HepG2 (cell line): ENCODE measurements at regions of chr7 and their contacts with region 1.

Region 1: GRCh38 chr7:48088559-48089045 is 463 bp upstream of the UPP1 start:
- DNase-seq: peak; percentile 97
- ATAC-seq: peak; percentile 89
- H3K4me3 ChIP-seq: peak overlapping the region; percentile 52 to 87 (median 86)
- H3K27ac ChIP-seq: peak overlapping the region; percentile 90
- H3K4me1 ChIP-seq: peaks cover 53% of the 10 kb centered on the region
- H3K27me3 ChIP-seq: no peaks in the 10 kb centered on the region
- CTCF ChIP-seq: no peak
- EP300 ChIP-seq: peak in 1 of 2 experiments; percentile 47; a peak in 1 of 4 replicates
- POLR2A ChIP-seq: peak; percentile 75 to 86
- RAD21 ChIP-seq: 0 out of 2 replicates have a peak, but pooled peaks have one; percentile 29

Region 2: DNA sequence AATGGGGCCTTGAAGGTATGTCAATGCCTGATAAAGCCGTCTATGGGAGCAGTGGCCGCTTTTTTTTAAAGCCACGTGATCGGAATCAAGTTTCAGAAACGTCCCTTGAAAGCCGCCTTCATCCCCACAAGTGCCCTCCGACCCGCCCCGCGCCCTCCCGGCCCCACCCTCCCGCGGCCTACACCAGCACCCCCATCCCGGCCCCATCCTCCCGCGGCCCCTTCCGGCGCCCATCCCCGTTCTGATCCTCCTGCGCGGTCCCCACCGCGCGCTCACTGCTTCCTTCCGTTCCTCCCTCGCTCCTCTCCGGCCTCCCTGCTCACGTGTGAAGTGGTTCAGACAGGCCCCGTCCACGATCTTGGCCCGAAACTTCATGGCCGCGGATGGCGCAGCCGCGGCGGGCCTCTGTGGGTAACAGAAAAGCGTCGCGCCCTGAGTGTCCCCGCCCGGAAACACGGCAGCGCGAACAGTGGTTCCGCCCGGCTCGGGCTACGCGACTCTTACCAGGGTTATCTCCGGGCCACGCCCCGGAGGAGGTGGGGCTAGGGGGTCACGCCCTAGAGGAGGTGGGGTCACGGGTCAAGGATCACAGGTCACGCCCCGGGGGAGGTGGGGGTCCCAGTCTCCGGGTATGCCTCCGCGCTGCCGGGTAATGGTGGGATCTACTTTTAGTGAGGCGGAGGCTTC is 109.3 kb before region 1 on chr7 and contains the start of gene HUS1:
- CTCF ChIA-PET with region 1: no interaction called
- POLR2A ChIA-PET with region 1: interaction called, 5 read pairs
- in situ Hi-C with region 1: no loop called
- intact Hi-C with region 1: loop called (anchors 1 kb)
- DNase-seq: peak; percentile 80
- ATAC-seq: peak; percentile 99
- H3K4me3 ChIP-seq: peak within 1 kb of the TSS; percentile 72 to 81 (median 77)
- H3K27ac ChIP-seq: peak within 1 kb of the TSS; percentile 77
- H3K4me1 ChIP-seq: peaks cover 15% of the 10 kb centered on the region
- H3K27me3 ChIP-seq: no peaks in the 10 kb centered on the region; a peak in 1 of 5 replicates
- CTCF ChIP-seq: no peak; the same call in none of the 2 replicates
- EP300 ChIP-seq: peak in 1 of 2 experiments; percentile 42; a peak in 2 of 4 replicates
- POLR2A ChIP-seq: peak; percentile 75 to 78
- RAD21 ChIP-seq: 0 out of 2 replicates have a peak, but pooled peaks have one; percentile 43
- total RNA-seq, gene HUS1: 16.9 and 23.4 TPM in 2 replicates

Region 3: GRCh38 chr7:47991741-47992311 is 96.8 kb before region 1 on chr7:
- CTCF ChIA-PET with region 1: no interaction called
- POLR2A ChIA-PET with region 1: interaction called, 12 read pairs
- in situ Hi-C with region 1: no loop called
- intact Hi-C with region 1: loop called (anchors 2 kb)
- DNase-seq: peak; percentile 63
- ATAC-seq: peak; percentile 99
- H3K4me3 ChIP-seq: peak overlapping the region; percentile 41 to 72 (median 42)
- H3K27ac ChIP-seq: no peak overlapping the region
- H3K4me1 ChIP-seq: peaks cover 40% of the 10 kb centered on the region
- H3K27me3 ChIP-seq: no peaks in the 10 kb centered on the region
- CTCF ChIP-seq: peak; percentile 88
- EP300 ChIP-seq: no peak
- POLR2A ChIP-seq: no peak
- RAD21 ChIP-seq: peak; percentile 79

Region 4: GRCh38 chr7:48011323-48011722 is 77.3 kb before region 1 on chr7:
- CTCF ChIA-PET with region 1: no interaction called
- POLR2A ChIA-PET with region 1: no interaction called
- in situ Hi-C with region 1: no loop called
- intact Hi-C with region 1: no loop called
- DNase-seq: no peak
- ATAC-seq: no peak
- H3K4me3 ChIP-seq: no peak overlapping the region
- H3K27ac ChIP-seq: no peak overlapping the region
- H3K4me1 ChIP-seq: no peaks in the 10 kb centered on the region
- H3K27me3 ChIP-seq: peaks cover 0 to 14% of the 10 kb centered on the region in 2 experiments; a peak in 2 of 5 replicates
- CTCF ChIP-seq: no peak
- EP300 ChIP-seq: no peak
- POLR2A ChIP-seq: no peak
- RAD21 ChIP-seq: no peak

Region 5: GRCh38 chr7:48035301-48035966 is 53.2 kb before region 1 on chr7 and contains the start of gene C7orf57:
- CTCF ChIA-PET with region 1: no interaction called
- POLR2A ChIA-PET with region 1: no interaction called
- in situ Hi-C with region 1: no loop called
- intact Hi-C with region 1: loop called (anchors 5 kb)
- DNase-seq: peak; percentile 54
- ATAC-seq: peak; percentile 99
- H3K4me3 ChIP-seq: peak within 1 kb of the TSS in 2 of 3 experiments; percentile 37 to 63; a peak in 4 of 6 replicates
- H3K27ac ChIP-seq: no peak within 1 kb of the TSS
- H3K4me1 ChIP-seq: peaks cover 10% of the 10 kb centered on the region
- H3K27me3 ChIP-seq: peaks cover 0 to 23% of the 10 kb centered on the region in 2 experiments; a peak in 3 of 5 replicates
- CTCF ChIP-seq: peak; percentile 77
- EP300 ChIP-seq: no peak
- POLR2A ChIP-seq: no peak
- RAD21 ChIP-seq: no peak
- total RNA-seq, gene C7orf57: not detected in 2 replicates

Region 6: DNA sequence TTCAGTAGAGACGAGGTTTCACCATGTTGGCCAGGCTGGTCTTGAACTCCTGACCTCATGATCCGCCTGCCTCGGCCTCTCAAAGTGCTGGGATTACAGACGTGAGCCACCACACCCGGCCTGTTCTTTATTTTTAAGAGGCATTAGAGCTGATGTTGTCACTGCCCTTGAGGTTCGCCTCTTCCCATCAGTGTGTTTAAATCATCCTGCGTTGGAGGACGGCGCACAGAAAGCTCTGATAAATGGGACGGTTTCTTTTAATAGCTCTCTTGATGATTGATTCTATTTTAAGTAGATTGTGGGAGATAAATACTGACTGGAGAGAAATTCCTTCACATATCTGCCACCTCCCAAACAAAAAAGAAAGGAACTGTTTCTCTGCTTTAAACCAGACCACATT is 29.4 kb after region 1 on chr7:
- CTCF ChIA-PET with region 1: no interaction called
- POLR2A ChIA-PET with region 1: no interaction called
- in situ Hi-C with region 1: no loop called
- intact Hi-C with region 1: no loop called
- DNase-seq: no peak
- ATAC-seq: no peak
- H3K4me3 ChIP-seq: no peak overlapping the region
- H3K27ac ChIP-seq: no peak overlapping the region
- H3K4me1 ChIP-seq: 0 out of 2 replicates have a peak, but pooled peaks cover 6% of the 10 kb centered on the region
- H3K27me3 ChIP-seq: no peaks in the 10 kb centered on the region
- CTCF ChIP-seq: no peak
- EP300 ChIP-seq: no peak
- POLR2A ChIP-seq: no peak
- RAD21 ChIP-seq: no peak

Region 7: DNA sequence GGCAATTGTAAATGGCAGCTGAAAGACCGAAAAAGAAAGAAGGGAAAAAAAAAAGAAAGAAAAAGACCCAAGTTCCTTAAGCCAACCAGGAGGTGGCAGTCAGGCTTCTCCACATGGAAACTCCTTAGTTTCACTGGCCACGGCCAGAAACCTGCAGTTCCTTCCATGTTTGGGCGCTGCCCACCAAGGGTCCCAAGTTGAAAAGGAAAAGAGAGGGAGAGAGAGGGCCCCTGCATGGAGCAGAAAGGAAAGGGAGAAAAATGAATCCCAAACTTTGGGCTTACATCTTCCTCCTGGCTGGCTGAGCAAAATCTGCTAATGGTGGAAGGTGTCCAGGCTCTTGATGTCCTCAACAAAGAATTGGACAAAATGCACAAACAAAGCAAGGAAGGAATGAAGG is 50.9 kb after region 1 on chr7:
- CTCF ChIA-PET with region 1: no interaction called
- POLR2A ChIA-PET with region 1: interaction called, 34 read pairs
- in situ Hi-C with region 1: no loop called
- intact Hi-C with region 1: loop called (anchors 2 kb)
- DNase-seq: peak; percentile 72
- ATAC-seq: peak; percentile 51
- H3K4me3 ChIP-seq: peak overlapping the region; percentile 47 to 63 (median 55)
- H3K27ac ChIP-seq: peak overlapping the region; percentile 90
- H3K4me1 ChIP-seq: peaks cover 63% of the 10 kb centered on the region
- H3K27me3 ChIP-seq: no peaks in the 10 kb centered on the region
- CTCF ChIP-seq: peak; percentile 76
- EP300 ChIP-seq: no peak
- POLR2A ChIP-seq: no peak
- RAD21 ChIP-seq: peak; percentile 49